Naive thymus-derived CD4-positive, alpha-beta T cell (primary cell): ENCODE measurements at regions of chr16 and their contacts with region 1.

Region 1: DNA sequence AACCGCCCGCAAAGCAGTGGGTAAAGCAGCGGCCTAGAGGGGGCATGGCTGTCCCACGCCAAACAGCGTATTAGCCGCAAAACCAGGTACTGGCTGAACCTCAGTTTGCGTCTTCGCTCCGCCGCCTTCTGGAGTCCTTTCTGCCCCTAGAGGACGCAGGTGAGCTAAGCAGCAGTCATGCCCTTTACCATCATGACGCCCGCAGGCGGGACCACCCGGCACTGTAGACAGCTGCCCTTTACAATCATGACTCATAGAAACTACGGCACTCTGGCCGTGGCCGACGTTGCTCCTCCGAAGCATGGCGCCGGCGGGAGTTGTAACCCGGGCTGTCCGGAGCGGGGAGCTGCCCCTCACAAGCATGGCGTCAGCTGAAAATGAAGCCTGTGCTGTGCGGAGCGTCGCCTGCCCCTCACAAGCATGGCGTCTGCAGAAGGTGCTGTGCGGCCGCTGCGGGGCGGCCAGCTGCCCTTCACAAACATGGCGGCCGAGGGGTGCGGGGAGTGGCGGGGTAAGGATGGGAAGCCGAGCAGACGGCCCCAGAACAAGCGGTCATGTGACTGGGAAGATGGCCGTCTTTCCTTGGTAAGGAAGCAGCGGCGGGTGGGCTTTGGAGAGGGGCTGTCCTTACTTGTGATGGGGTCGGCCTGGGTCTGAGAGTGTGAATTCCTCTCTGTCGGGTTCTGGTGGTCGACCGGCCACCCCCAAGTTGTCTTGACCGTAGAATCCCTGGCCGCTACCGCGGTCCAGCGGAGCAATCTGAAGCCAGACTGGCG is at the start of gene VPS35L:
- DNase-seq: peak; percentile 92 to 97 (median 95)
- ATAC-seq: peak; percentile 98
- H3K4me3 ChIP-seq: peak within 1 kb of the TSS; percentile 86
- H3K4me3 Mint-ChIP-seq: peak within 1 kb of the TSS; percentile 91 to 100 (median 97)
- H3K27ac ChIP-seq: peak within 1 kb of the TSS; percentile 78
- H3K27ac Mint-ChIP-seq: peak within 1 kb of the TSS; percentile 92 to 98 (median 95)
- H3K4me1 ChIP-seq: peaks cover 4 to 13% of the 10 kb centered on the region in 2 donors
- H3K4me1 Mint-ChIP-seq: peaks cover 0 to 30% (median 24%) of the 10 kb centered on the region in 7 donors
- H3K27me3 ChIP-seq: no peaks in the 10 kb centered on the region
- H3K27me3 Mint-ChIP-seq: no peaks in the 10 kb centered on the region
- total RNA-seq, gene VPS35L: 38.6 to 51.1 (median 46.6) TPM

Region 2: GRCh38 chr16:19067349-19068236 is 487.8 kb before region 1 on chr16 and contains the start of gene COQ7:
- CTCF ChIA-PET with region 1: no interaction called
- POLR2A ChIA-PET with region 1: interaction called, 10 read pairs
- intact Hi-C with region 1: loop called (anchors 1 kb)
- DNase-seq: peak; percentile 95 to 100 (median 99)
- ATAC-seq: peak; percentile 92
- H3K4me3 ChIP-seq: peak within 1 kb of the TSS; percentile 73
- H3K4me3 Mint-ChIP-seq: peak within 1 kb of the TSS; percentile 86 to 97 (median 95)
- H3K27ac ChIP-seq: peak within 1 kb of the TSS; percentile 100
- H3K27ac Mint-ChIP-seq: peak within 1 kb of the TSS; percentile 88 to 100 (median 98)
- H3K4me1 ChIP-seq: peaks cover 5 to 10% of the 10 kb centered on the region in 2 donors
- H3K4me1 Mint-ChIP-seq: peaks cover 0 to 24% (median 15%) of the 10 kb centered on the region in 7 donors
- H3K27me3 ChIP-seq: no peaks in the 10 kb centered on the region
- H3K27me3 Mint-ChIP-seq: peaks cover 0 to 5% (median 0%) of the 10 kb centered on the region in 5 donors
- total RNA-seq, gene COQ7: 16.7 to 20.4 (median 17.5) TPM

Region 3: GRCh38 chr16:19542138-19542821 is 13.1 kb before region 1 on chr16:
- CTCF ChIA-PET with region 1: interaction called, 4 read pairs
- POLR2A ChIA-PET with region 1: interaction called, 10 read pairs
- intact Hi-C with region 1: no loop called
- DNase-seq: no peak
- ATAC-seq: no peak
- H3K4me3 ChIP-seq: no peak overlapping the region
- H3K4me3 Mint-ChIP-seq: no peak overlapping the region
- H3K27ac ChIP-seq: no peak overlapping the region
- H3K27ac Mint-ChIP-seq: no peak overlapping the region
- H3K4me1 ChIP-seq: no peaks in the 10 kb centered on the region
- H3K4me1 Mint-ChIP-seq: peaks cover 0 to 14% (median 0%) of the 10 kb centered on the region in 7 donors
- H3K27me3 ChIP-seq: no peaks in the 10 kb centered on the region
- H3K27me3 Mint-ChIP-seq: no peaks in the 10 kb centered on the region

Region 4: GRCh38 chr16:19601083-19601976 is 46.0 kb after region 1 on chr16:
- CTCF ChIA-PET with region 1: interaction called, 8 read pairs
- POLR2A ChIA-PET with region 1: no interaction called
- intact Hi-C with region 1: loop called in 1 of 2 experiments (anchors 1 kb)
- DNase-seq: peak in 7 of 9 donors; percentile 20 to 60 (median 50)
- ATAC-seq: peak; percentile 38
- H3K4me3 ChIP-seq: no peak overlapping the region
- H3K4me3 Mint-ChIP-seq: no peak overlapping the region
- H3K27ac ChIP-seq: no peak overlapping the region
- H3K27ac Mint-ChIP-seq: peak overlapping the region in 3 of 9 donors; percentile 3 to 56 (median 29)
- H3K4me1 ChIP-seq: no peaks in the 10 kb centered on the region
- H3K4me1 Mint-ChIP-seq: peaks cover 0 to 5% (median 0%) of the 10 kb centered on the region in 7 donors
- H3K27me3 ChIP-seq: no peaks in the 10 kb centered on the region
- H3K27me3 Mint-ChIP-seq: no peaks in the 10 kb centered on the region

Region 5: DNA sequence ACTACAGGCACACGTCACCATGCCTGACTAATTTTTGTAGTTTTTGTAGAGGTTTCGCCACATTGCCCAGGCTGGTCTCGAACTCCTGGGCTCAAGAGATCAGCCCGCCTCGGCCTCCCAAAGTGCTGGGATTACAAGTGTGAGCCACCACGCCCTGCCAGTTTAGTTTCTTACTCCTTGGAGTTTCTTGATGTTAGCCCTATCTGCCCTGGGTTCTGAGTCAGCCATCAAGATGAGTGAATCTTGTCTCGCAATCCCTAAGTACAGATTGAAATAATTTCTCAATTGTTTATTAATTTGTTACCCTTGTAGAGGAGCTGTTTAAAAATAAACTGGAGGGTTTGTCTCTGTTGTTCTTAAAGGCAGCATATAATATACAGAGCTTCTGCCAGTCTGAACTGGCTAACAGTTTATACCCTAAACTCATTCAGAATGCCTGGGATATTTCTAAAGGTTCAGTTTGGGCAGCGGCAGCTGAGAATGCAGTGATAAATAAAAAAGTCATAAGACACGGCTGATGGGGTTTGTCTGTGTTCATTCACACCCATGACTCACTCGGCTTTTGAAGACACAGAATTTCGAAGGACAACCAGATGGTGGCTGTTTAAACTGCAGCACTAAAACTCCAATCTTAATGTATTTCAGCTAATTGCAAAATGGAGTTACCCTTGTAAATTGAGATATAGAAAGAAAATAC is 289.7 kb after region 1 on chr16:
- CTCF ChIA-PET with region 1: no interaction called
- POLR2A ChIA-PET with region 1: no interaction called
- intact Hi-C with region 1: no loop called
- DNase-seq: no peak
- ATAC-seq: no peak
- H3K4me3 ChIP-seq: no peak overlapping the region
- H3K4me3 Mint-ChIP-seq: no peak overlapping the region
- H3K27ac ChIP-seq: no peak overlapping the region
- H3K27ac Mint-ChIP-seq: no peak overlapping the region
- H3K4me1 ChIP-seq: no peaks in the 10 kb centered on the region
- H3K4me1 Mint-ChIP-seq: no peaks in the 10 kb centered on the region
- H3K27me3 ChIP-seq: no peaks in the 10 kb centered on the region
- H3K27me3 Mint-ChIP-seq: no peaks in the 10 kb centered on the region

Region 6: GRCh38 chr16:19886073-19886941 is 331.0 kb after region 1 on chr16:
- CTCF ChIA-PET with region 1: interaction called, 8 read pairs
- POLR2A ChIA-PET with region 1: interaction called, 4 read pairs
- intact Hi-C with region 1: loop called (anchors 1 kb)
- DNase-seq: peak; percentile 66 to 85 (median 78)
- ATAC-seq: peak; percentile 78
- H3K4me3 ChIP-seq: peak overlapping the region; percentile 70
- H3K4me3 Mint-ChIP-seq: peak overlapping the region; percentile 84 to 96 (median 90)
- H3K27ac ChIP-seq: no peak overlapping the region
- H3K27ac Mint-ChIP-seq: peak overlapping the region in 6 of 9 donors; percentile 17 to 72 (median 52)
- H3K4me1 ChIP-seq: peaks cover 9 to 23% of the 10 kb centered on the region in 2 donors
- H3K4me1 Mint-ChIP-seq: peaks cover 12 to 26% (median 22%) of the 10 kb centered on the region in 7 donors
- H3K27me3 ChIP-seq: peaks cover 0 to 12% of the 10 kb centered on the region in 2 donors
- H3K27me3 Mint-ChIP-seq: peaks cover 4 to 39% (median 13%) of the 10 kb centered on the region in 5 donors

Region 7: GRCh38 chr16:20383106-20384029 is 828.0 kb after region 1 on chr16:
- CTCF ChIA-PET with region 1: no interaction called
- POLR2A ChIA-PET with region 1: no interaction called
- intact Hi-C with region 1: loop called in 1 of 2 experiments (anchors 1 kb)
- DNase-seq: peak in 7 of 9 donors; percentile 3 to 54 (median 37)
- ATAC-seq: peak; percentile 67
- H3K4me3 ChIP-seq: no peak overlapping the region
- H3K4me3 Mint-ChIP-seq: peak overlapping the region in 1 of 10 donors; percentile 22
- H3K27ac ChIP-seq: no peak overlapping the region
- H3K27ac Mint-ChIP-seq: no peak overlapping the region
- H3K4me1 ChIP-seq: peaks cover 0 to 4% of the 10 kb centered on the region in 2 donors
- H3K4me1 Mint-ChIP-seq: peaks cover 0 to 6% (median 0%) of the 10 kb centered on the region in 7 donors
- H3K27me3 ChIP-seq: no peaks in the 10 kb centered on the region
- H3K27me3 Mint-ChIP-seq: peaks cover 11 to 29% (median 19%) of the 10 kb centered on the region in 5 donors